Activated naive CD4-positive, alpha-beta T cell treated with anti-CD3 and anti-CD28 coated beads for 36 hours (primary cell): ENCODE measurements at regions of chr1 and their contacts with region 1.

Region 1: DNA sequence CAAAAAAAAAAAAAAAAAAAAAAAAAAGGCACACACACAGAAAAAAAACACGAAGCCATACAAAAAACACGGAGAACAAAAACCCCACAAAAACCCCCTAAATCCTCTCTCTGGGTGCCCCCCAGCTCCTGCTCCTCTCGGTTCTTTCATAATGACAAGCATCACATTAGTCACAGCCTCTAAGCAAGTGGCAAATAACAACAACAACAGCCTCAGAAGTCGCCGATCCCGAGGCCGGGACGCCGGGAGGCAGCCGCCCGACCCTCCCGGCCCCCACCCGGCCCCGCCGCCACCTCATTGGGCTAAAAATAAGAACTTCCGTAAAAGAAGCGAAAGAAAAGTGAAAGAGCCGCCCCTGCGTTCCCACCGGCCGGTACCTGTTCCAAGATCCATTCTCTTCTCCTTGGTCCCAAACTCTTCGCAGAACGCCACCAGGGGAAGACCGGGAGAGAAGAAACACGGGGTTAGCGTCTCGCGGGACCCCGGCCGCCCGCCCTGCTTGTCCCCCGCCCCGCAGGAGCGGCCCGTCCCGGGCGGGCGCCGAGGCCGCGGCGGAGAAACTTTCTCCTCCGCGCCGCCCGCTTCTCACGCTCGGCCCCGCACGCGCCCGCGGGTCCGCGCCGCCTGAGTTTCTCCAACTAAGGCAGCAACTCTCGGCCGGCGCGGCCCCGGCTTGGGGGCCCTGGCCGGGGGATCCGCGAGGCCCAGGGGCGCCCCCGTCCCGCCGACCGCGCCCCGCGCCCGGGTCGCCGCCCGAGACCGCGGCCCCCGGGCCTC is 102.8 kb downstream of the CASZ1 start:
- DNase-seq: peak; percentile 53
- H3K4me3 Mint-ChIP-seq: peak overlapping the region; percentile 80
- H3K27ac Mint-ChIP-seq: peak overlapping the region; percentile 61
- H3K4me1 Mint-ChIP-seq: peaks cover 28% of the 10 kb centered on the region
- H3K27me3 Mint-ChIP-seq: peaks cover 2% of the 10 kb centered on the region

Region 2: DNA sequence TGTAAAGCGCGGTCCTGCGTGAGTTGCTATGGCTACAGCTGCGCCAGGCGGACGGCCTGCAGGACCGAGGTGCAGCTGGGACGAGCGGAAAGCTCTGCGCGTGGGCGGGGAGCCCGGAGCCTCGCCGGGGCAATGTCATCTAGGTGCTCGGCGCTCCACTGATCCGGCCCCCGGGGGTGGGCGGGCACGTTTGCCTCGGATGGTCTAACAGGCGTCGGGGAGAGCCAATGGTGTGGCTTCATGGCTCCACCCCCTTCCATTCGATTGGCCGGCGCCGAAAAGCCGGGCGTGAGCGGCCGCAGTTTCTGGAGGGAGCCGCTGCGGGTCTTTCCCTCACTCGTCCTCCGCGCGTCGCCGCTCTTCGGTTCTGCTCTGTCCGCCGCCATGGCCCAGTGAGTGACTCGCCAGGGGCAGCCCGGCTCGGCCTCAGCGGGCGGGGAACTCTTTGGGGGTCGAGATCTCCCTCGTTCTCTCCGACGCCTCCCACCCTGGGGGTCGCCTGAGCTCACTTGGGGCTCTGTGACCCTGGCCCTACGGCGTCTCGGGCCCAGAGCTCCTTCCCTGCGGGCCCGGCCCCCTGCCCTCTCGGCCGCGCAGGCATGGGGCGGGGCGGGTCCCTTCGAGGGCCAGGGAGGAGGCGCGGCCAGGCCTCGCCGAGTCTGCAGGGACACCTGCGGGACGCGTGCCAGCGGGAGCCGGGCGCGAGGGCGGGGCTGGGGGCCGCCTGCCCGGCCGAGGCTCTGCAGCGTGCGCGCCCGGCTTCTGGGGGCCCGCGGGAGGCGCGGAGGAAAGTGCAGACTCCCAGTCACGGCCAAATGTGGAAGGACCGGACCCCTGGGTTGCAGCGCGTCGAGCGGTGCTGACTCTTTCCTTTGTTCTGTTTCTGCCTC is 294.7 kb before region 1 on chr1 and contains the start of gene PGD:
- CTCF ChIA-PET with region 1: no interaction called
- intact Hi-C with region 1: loop called (anchors 2 kb)
- DNase-seq: peak; percentile 98
- H3K4me3 Mint-ChIP-seq: peak within 1 kb of the TSS; percentile 83
- H3K27ac Mint-ChIP-seq: no peak within 1 kb of the TSS
- H3K4me1 Mint-ChIP-seq: peaks cover 25% of the 10 kb centered on the region
- H3K27me3 Mint-ChIP-seq: no peaks in the 10 kb centered on the region
- total RNA-seq, gene PGD: 94.8 to 101 TPM

Region 3: DNA sequence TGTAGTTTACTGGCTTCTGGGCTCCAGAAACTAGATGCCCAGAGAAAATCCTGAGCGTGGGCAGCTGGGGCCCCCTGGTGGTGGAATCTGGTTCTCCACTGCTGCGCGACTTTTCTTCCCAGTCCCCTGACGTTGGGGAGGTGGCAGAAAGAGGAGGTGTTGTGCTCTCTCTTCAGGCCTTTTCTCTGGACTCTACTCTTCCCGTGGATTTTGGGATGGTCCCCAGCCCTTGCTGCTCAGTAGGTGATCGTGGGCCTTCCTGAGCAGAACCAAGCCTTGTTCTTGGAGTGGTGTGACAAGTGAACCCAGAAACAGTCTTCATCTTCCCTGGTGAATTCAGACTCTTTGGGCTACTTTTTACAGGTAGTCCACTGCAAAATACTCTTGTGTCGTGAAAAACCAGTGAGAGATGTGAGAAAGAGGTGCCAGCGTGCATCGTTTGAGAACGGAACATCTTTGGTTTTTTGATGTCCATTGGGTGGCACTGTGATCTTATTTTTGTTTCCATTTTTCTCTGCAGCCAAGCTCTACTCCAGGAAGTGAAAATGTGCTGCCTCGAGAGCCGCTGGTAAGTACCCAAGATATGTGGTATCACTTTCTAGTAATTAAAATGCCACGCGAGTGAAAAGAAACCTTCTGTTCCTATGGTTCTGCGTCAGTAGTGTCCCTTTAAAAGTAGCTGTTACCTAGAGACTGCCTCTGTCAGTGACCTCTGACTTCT is 198.8 kb before region 1 on chr1:
- CTCF ChIA-PET with region 1: interaction called, 7 read pairs
- intact Hi-C with region 1: loop called (anchors 1 kb)
- DNase-seq: peak; percentile 90
- H3K4me3 Mint-ChIP-seq: peak overlapping the region; percentile 67
- H3K27ac Mint-ChIP-seq: peak overlapping the region; percentile 87
- H3K4me1 Mint-ChIP-seq: peaks cover 38% of the 10 kb centered on the region
- H3K27me3 Mint-ChIP-seq: no peaks in the 10 kb centered on the region

Region 4: GRCh38 chr1:10733474-10734366 is 40.0 kb after region 1 on chr1:
- CTCF ChIA-PET with region 1: interaction called, 3 read pairs
- intact Hi-C with region 1: loop called (anchors 2 kb)
- DNase-seq: peak; percentile 85
- H3K4me3 Mint-ChIP-seq: no peak overlapping the region
- H3K27ac Mint-ChIP-seq: no peak overlapping the region
- H3K4me1 Mint-ChIP-seq: peaks cover 14% of the 10 kb centered on the region
- H3K27me3 Mint-ChIP-seq: no peaks in the 10 kb centered on the region

Region 5: GRCh38 chr1:10796019-10796944 is 102.6 kb after region 1 on chr1 and contains the start of gene CASZ1:
- CTCF ChIA-PET with region 1: no interaction called
- intact Hi-C with region 1: loop called (anchors 2 kb)
- DNase-seq: no peak
- H3K4me3 Mint-ChIP-seq: no peak within 1 kb of the TSS
- H3K27ac Mint-ChIP-seq: no peak within 1 kb of the TSS
- H3K4me1 Mint-ChIP-seq: peaks cover 16% of the 10 kb centered on the region
- H3K27me3 Mint-ChIP-seq: peaks cover 53% of the 10 kb centered on the region
- total RNA-seq, gene CASZ1: 1.7 to 2.0 TPM

Region 6: GRCh38 chr1:10867138-10867721 is 173.5 kb after region 1 on chr1:
- CTCF ChIA-PET with region 1: interaction called, 4 read pairs
- intact Hi-C with region 1: loop called (anchors 1 kb)
- DNase-seq: peak; percentile 52
- H3K4me3 Mint-ChIP-seq: no peak overlapping the region
- H3K27ac Mint-ChIP-seq: no peak overlapping the region
- H3K4me1 Mint-ChIP-seq: peaks cover 12% of the 10 kb centered on the region
- H3K27me3 Mint-ChIP-seq: peaks cover 64% of the 10 kb centered on the region

Region 7: GRCh38 chr1:10941891-10942541 is 248.3 kb after region 1 on chr1:
- CTCF ChIA-PET with region 1: interaction called, 4 read pairs
- intact Hi-C with region 1: loop called (anchors 2 kb)
- DNase-seq: peak; percentile 68
- H3K4me3 Mint-ChIP-seq: no peak overlapping the region
- H3K27ac Mint-ChIP-seq: no peak overlapping the region
- H3K4me1 Mint-ChIP-seq: peaks cover 44% of the 10 kb centered on the region
- H3K27me3 Mint-ChIP-seq: peaks cover 50% of the 10 kb centered on the region